SK-N-SH (cell line): ENCODE measurements at regions of chr11 and their contacts with region 1.

Region 1: GRCh38 chr11:124194698-124195410 is 11.7 kb downstream of the OR10D3 start:
- DNase-seq: peak; percentile 64
- H3K4me3 ChIP-seq: no peak overlapping the region
- H3K27ac ChIP-seq: no peak overlapping the region
- H3K4me1 ChIP-seq: no peaks in the 10 kb centered on the region
- H3K27me3 ChIP-seq: peaks cover 4% of the 10 kb centered on the region; the same call in 1 of the 2 replicates
- CTCF ChIP-seq: peak; percentile 76
- EP300 ChIP-seq: no peak
- RAD21 ChIP-seq: peak; percentile 77

Region 2: DNA sequence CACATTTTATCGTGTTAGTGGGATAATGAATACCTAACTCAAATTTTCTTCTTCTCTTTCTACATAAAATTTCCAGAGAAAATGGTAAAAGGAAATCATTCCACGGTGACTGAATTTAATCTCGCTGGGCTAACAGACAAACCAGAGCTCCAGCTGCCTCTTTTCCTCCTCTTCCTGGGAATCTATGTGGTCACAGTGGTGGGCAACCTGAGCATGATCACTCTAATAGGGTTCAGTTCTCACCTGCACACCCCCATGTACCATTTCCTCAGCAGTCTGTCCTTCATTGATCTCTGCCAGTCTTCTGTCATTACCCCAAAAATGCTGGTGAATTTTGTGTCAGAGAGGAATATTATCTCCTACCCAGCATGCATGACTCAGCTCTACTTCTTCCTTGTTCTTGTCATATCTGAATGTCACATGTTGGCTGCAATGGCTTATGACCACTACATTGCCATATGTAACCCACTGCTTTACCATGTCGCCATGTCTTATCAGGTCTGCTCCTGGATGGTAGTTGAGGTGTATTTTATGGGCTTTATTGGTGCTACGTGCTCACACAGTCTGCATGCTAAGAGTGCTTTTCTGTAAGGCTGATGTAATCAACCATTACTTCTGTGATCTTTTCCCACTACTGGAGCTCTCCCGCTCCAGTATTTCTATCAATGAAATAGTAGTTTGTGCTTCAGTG is 12.4 kb after region 1 on chr11:
- CTCF ChIA-PET with region 1: interaction called, 19 read pairs
- POLR2A ChIA-PET with region 1: no interaction called
- DNase-seq: no peak
- H3K4me3 ChIP-seq: no peak overlapping the region
- H3K27ac ChIP-seq: no peak overlapping the region
- H3K4me1 ChIP-seq: no peaks in the 10 kb centered on the region
- H3K27me3 ChIP-seq: peaks cover 18% of the 10 kb centered on the region; the same call in 1 of the 2 replicates
- CTCF ChIP-seq: no peak
- EP300 ChIP-seq: no peak
- RAD21 ChIP-seq: no peak